Endothelial cell of umbilical vein (primary cell): ENCODE measurements at regions of chr20 and their contacts with region 1.

Region 1: DNA sequence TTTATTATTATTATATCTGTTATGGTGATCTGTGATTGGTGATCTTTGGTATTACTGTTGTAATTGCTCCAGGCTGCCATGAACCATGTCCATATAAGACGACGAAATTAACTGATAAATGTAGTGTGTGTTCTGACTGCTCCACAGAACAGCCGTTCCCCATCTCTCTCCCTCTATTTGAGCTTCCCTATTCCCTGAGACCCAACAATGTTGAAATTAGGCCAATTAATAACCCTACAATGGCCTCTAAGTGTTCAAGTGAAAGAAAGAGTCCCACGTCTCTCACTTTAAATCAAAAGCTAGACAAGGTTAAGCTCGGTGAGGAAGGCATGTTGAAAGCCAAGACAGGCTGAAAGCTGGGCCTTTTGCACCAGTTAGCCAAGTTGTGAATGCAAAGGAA is 51.6 kb downstream of the ZFP64 start:
- DNase-seq: no peak
- H3K4me3 ChIP-seq: no peak overlapping the region
- H3K27ac ChIP-seq: no peak overlapping the region
- H3K4me1 ChIP-seq: no peaks in the 10 kb centered on the region
- H3K27me3 ChIP-seq: no peaks in the 10 kb centered on the region
- CTCF ChIP-seq: no peak
- POLR2A ChIP-seq: no peak

Region 2: DNA sequence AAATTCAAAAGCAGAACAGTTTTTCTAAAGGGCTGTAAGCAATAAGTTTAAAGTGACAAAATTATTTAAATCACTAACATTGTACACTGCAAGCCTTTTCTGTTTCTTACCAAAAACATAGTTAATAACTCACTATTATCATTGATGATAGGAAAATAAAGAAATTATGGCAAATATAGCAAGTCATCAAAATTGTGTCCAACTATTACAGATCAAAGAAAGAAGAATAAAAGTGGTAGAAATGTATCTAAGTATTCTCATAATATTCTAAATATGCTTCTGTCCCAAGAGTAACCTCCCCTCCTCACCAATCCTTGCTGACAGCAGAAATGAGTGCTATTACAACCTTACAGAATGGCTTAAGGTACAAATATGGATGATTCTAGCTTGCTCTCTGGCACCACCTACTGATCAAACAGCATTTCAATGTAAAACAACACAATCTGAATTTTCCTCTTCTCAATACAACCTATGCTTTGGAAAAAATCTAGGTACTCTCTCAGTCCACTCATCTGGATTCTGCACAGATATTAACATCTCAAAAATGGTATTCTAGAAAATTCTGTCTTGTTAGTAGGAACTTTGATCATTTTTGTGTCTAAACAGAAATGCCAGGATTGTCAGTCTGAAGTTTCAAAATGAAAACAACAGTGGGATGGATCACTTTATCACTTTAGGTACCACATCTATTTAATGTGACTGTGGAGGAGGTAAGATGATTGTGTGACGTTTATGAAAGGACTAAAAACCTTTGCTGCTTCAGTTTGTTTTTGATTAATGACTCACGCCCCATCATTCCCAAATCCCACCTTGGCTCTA is 10.7 kb after region 1 on chr20:
- CTCF ChIA-PET with region 1: interaction called, 10 read pairs
- POLR2A ChIA-PET with region 1: no interaction called
- dilution Hi-C with region 1: no loop called
- intact Hi-C with region 1: no loop called
- DNase-seq: peak; percentile 72
- H3K4me3 ChIP-seq: no peak overlapping the region
- H3K27ac ChIP-seq: no peak overlapping the region
- H3K4me1 ChIP-seq: no peaks in the 10 kb centered on the region
- H3K27me3 ChIP-seq: no peaks in the 10 kb centered on the region
- CTCF ChIP-seq: peak; percentile 61 to 73
- POLR2A ChIP-seq: no peak

Region 3: DNA sequence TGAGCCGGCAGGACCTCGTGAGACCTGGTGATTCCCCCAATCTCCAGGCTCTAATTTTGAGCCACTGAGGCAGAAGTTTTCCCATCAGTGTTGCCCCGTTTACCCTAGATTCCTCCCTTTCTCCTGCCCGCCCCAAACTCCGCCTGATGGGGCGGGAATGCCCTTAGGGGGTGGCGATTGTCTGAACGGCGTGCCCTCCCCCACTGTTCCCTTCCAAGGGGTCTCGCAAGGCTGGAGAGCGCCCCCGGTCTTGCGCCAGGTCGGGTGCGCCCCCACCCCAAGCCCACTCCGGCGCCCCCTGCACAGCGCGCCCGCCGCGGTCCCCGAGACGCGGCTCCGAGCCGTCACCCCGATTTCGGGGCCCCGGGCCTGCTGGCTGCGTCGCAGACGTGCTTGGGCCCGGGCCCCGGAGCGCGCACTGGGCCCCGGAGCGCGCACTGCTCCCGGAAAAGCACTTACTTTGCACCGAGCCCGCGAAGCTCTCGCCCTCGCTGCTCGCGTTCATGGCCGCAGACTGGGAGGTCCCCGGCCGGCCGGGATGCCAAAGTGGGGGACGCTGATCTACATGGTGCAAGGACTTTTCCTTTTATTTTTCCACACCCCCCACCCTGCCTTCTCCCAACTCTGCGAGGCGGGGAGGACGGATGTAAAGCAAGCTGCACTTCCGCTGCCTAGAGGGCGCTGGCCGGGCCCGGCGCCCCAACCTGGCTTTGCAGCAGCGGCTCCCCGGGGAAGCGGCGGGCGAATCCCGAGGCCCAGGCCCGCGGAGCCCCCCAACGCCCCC is 51.3 kb after region 1 on chr20 and contains the start of gene ZFP64:
- CTCF ChIA-PET with region 1: no interaction called
- POLR2A ChIA-PET with region 1: no interaction called
- dilution Hi-C with region 1: no loop called
- intact Hi-C with region 1: no loop called
- DNase-seq: peak; percentile 80
- H3K4me3 ChIP-seq: peak within 1 kb of the TSS; percentile 51 to 83 (median 75)
- H3K27ac ChIP-seq: peak within 1 kb of the TSS; percentile 36
- H3K4me1 ChIP-seq: peaks cover 12% of the 10 kb centered on the region
- H3K27me3 ChIP-seq: no peaks in the 10 kb centered on the region
- CTCF ChIP-seq: peak; percentile 58 to 70
- POLR2A ChIP-seq: peak; percentile 31
- total RNA-seq, gene ZFP64: 31.7 and 34.4 TPM in 2 replicates